ENCODE measurements at regions of chr4 and their contacts with region 1.

Region 1: DNA sequence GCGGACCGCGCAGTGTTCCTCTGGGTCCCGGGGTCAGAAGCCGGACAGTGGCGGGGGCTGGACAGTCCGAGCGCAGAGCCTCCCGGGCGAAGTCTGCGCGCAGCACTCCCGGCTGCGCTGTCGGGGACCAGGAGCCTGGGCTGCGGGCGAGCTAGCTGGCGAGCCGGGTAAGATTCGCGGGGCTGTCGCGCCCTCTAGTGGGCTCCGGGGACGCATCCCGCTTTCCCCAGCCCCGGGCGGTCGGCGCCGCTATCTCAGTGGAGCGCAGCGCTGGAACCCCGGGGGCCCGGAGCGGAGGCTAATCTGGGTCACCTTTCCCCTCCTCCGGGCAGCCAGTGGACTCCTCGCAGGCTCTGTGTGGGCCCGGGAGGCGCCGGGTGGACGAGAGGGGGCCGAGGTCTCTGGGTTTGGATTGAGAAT is 4.2 kb downstream of the PDGFRA start:
- DNase-seq: peak; percentile 77
- H3K4me3 ChIP-seq: peak overlapping the region in 2 of 3 experiments; percentile 43 to 62
- H3K27ac ChIP-seq: no peak overlapping the region
- H3K4me1 ChIP-seq: peaks cover 24% of the 10 kb centered on the region
- H3K27me3 ChIP-seq: peaks cover 49 to 53% of the 10 kb centered on the region in 2 experiments
- CTCF ChIP-seq: peak; percentile 81 to 95
- POLR2A ChIP-seq: no peak

Region 2: GRCh38 chr4:52551487-52551886 is 1681.8 kb before region 1 on chr4:
- CTCF ChIA-PET with region 1: interaction called, 68 read pairs
- POLR2A ChIA-PET with region 1: no interaction called
- dilution Hi-C with region 1: no loop called
- intact Hi-C with region 1: no loop called
- DNase-seq: no peak
- H3K4me3 ChIP-seq: no peak overlapping the region
- H3K27ac ChIP-seq: no peak overlapping the region
- H3K4me1 ChIP-seq: no peaks in the 10 kb centered on the region
- H3K27me3 ChIP-seq: peaks cover 13 to 16% of the 10 kb centered on the region in 2 experiments
- CTCF ChIP-seq: no peak
- POLR2A ChIP-seq: no peak

Region 3: GRCh38 chr4:52996261-52996892 is 1236.9 kb before region 1 on chr4:
- CTCF ChIA-PET with region 1: interaction called, 26 read pairs
- POLR2A ChIA-PET with region 1: no interaction called
- dilution Hi-C with region 1: no loop called
- intact Hi-C with region 1: no loop called
- DNase-seq: peak; percentile 89
- H3K4me3 ChIP-seq: no peak overlapping the region
- H3K27ac ChIP-seq: no peak overlapping the region
- H3K4me1 ChIP-seq: peaks cover 11% of the 10 kb centered on the region
- H3K27me3 ChIP-seq: no peaks in the 10 kb centered on the region
- CTCF ChIP-seq: no peak
- POLR2A ChIP-seq: no peak

Region 4: DNA sequence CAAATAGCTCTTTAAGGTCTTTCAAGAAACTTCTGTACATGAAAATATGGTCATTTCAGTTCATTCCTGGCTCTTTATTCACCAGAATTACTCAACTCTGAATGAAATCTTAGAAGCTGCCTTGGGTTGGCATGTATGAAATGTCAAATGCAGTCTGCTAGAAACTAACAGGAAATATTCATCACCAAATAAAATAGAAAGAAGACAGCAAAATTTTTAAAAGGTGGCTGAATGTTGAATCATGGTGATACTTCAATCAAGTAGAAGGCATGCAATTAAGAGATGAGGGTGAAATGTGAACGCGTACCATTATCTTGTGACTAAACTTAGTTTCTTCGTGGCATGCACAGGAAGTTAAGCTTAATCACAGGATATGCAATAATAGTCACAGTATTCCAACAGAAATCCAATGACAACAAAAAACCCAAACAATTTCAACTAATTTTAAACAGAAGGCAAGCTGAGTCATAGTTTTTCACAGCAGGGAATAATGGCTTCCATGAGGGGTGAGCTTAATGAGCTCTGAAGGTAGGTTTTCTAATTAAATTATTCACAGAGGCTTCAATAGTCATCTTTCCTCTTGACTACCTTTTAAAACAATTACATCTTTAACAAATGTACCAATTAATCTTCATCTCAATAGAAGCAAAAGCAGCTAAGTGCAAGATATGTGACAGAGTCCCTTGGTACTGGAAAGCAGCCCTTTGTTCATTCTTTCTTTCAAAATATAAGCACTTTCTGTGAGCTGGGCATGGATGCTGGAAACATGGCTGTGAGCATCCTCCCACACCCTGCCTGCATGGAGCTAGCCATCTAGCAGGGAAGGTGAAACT is 911.9 kb before region 1 on chr4:
- CTCF ChIA-PET with region 1: interaction called, 22 read pairs
- POLR2A ChIA-PET with region 1: no interaction called
- dilution Hi-C with region 1: no loop called
- intact Hi-C with region 1: loop called (anchors 2 kb)
- DNase-seq: peak; percentile 94
- H3K4me3 ChIP-seq: peak overlapping the region in 1 of 3 experiments; percentile 32
- H3K27ac ChIP-seq: peak overlapping the region; percentile 98
- H3K4me1 ChIP-seq: peaks cover 29% of the 10 kb centered on the region
- H3K27me3 ChIP-seq: no peaks in the 10 kb centered on the region
- CTCF ChIP-seq: no peak
- POLR2A ChIP-seq: peak; percentile 56

Region 5: DNA sequence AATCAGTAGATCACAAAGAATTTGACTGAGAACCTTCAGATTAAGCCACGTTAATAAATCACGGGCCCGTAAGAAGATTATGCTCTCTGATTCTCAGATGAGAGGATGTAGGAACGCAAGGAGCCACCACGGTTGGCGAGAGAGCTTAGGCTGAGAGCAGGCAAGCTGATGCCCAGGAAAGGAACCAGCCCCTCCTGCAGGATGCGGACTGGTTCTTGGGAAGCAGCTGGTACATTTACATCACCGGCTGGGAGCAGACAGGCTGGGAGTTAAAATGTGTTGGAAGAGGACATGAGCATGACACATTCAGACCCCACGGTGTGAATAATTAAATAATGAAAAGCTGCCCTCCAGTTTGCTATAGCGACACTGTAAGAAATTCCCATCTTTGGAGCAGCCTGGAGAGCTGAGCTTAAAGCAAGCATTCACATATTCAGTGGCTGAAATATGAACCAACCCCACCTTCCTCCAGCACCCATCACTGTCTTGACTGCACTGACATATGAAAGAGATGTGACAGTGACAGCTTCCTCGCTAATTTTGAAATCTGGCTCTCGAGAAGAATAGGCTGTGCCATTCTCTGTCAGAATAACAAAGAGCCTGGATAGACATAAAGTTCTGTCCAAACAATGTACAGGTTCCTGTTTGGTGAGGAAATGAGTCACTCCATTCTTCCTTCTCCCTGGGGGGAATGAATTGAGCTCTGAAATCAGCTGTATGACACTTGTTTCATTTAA is 675.1 kb before region 1 on chr4:
- CTCF ChIA-PET with region 1: interaction called, 33 read pairs
- POLR2A ChIA-PET with region 1: no interaction called
- dilution Hi-C with region 1: no loop called
- intact Hi-C with region 1: loop called (anchors 2 kb)
- DNase-seq: peak; percentile 88
- H3K4me3 ChIP-seq: peak overlapping the region in 1 of 3 experiments; percentile 44
- H3K27ac ChIP-seq: peak overlapping the region; percentile 95
- H3K4me1 ChIP-seq: peaks cover 36% of the 10 kb centered on the region
- H3K27me3 ChIP-seq: no peaks in the 10 kb centered on the region
- CTCF ChIP-seq: peak in 1 of 2 donors; percentile 4
- POLR2A ChIP-seq: peak; percentile 39

Region 6: GRCh38 chr4:53899586-53900270 is 333.6 kb before region 1 on chr4:
- CTCF ChIA-PET with region 1: interaction called, 198 read pairs
- POLR2A ChIA-PET with region 1: no interaction called
- dilution Hi-C with region 1: no loop called
- intact Hi-C with region 1: no loop called
- DNase-seq: peak; percentile 43
- H3K4me3 ChIP-seq: no peak overlapping the region
- H3K27ac ChIP-seq: no peak overlapping the region
- H3K4me1 ChIP-seq: no peaks in the 10 kb centered on the region
- H3K27me3 ChIP-seq: peaks cover 19% of the 10 kb centered on the region in 2 experiments
- CTCF ChIP-seq: no peak
- POLR2A ChIP-seq: no peak

Region 7: GRCh38 chr4:54155936-54156335 is 77.4 kb before region 1 on chr4:
- CTCF ChIA-PET with region 1: no interaction called
- POLR2A ChIA-PET with region 1: no interaction called
- dilution Hi-C with region 1: no loop called
- intact Hi-C with region 1: no loop called
- DNase-seq: no peak
- H3K4me3 ChIP-seq: no peak overlapping the region
- H3K27ac ChIP-seq: no peak overlapping the region
- H3K4me1 ChIP-seq: no peaks in the 10 kb centered on the region
- H3K27me3 ChIP-seq: peaks cover 0 to 2% of the 10 kb centered on the region in 2 experiments
- CTCF ChIP-seq: no peak
- POLR2A ChIP-seq: no peak

Region 8: GRCh38 chr4:54277691-54278090 is 44.4 kb after region 1 on chr4:
- CTCF ChIA-PET with region 1: interaction called, 14 read pairs
- POLR2A ChIA-PET with region 1: no interaction called
- dilution Hi-C with region 1: no loop called
- intact Hi-C with region 1: no loop called
- DNase-seq: peak; percentile 92
- H3K4me3 ChIP-seq: peak overlapping the region in 1 of 3 experiments; percentile 14
- H3K27ac ChIP-seq: peak overlapping the region; percentile 5
- H3K4me1 ChIP-seq: peaks cover 45% of the 10 kb centered on the region
- H3K27me3 ChIP-seq: peaks cover 8 to 13% of the 10 kb centered on the region in 2 experiments
- CTCF ChIP-seq: no peak
- POLR2A ChIP-seq: no peak

Region 9: DNA sequence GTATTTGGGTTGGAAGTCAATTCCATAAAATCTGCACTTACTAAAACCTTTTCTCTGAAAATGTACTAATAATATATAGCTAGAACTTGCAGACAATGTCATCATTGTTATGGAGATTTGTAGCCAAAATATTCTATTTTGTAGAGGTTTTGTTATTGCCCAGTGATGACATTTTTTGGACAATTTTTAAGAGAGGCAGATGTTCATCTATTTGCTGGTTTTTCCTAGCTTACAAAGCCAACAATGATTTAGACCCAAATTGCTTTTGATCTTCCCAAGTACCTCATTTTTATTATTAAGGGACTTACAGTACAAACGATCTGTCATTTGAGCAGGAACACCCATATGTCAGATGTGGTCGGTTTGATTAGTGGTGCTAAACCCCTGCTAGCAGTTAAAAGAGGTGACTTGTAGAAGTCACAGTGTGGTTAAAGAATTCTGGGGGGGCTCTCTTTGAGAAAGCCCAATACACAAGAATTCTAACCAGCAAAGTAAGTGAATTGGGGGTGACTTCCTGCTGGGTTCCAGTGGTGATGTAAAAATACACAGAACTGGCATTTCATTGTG is 560.7 kb after region 1 on chr4:
- CTCF ChIA-PET with region 1: no interaction called
- POLR2A ChIA-PET with region 1: no interaction called
- dilution Hi-C with region 1: no loop called
- intact Hi-C with region 1: no loop called
- DNase-seq: no peak
- H3K4me3 ChIP-seq: no peak overlapping the region
- H3K27ac ChIP-seq: no peak overlapping the region
- H3K4me1 ChIP-seq: no peaks in the 10 kb centered on the region
- H3K27me3 ChIP-seq: peaks cover 0 to 2% of the 10 kb centered on the region in 2 experiments
- CTCF ChIP-seq: no peak
- POLR2A ChIP-seq: no peak